Activated CD4-positive, alpha-beta T cell treated with anti-CD3 and anti-CD28 coated beads, Interleukin-2, amount 10 ng/mL, durations not matched to agents 24 days and 14 days (primary cell): ENCODE measurements at regions of chr6 and their contacts with region 1.

Region 1: GRCh38 chr6:125986300-125987025 is at the start of gene TRMT11:
- DNase-seq: peak; percentile 93
- H3K4me3 Mint-ChIP-seq: peak within 1 kb of the TSS; percentile 8
- H3K27ac Mint-ChIP-seq: no peak within 1 kb of the TSS
- H3K4me1 Mint-ChIP-seq: peaks cover 7% of the 10 kb centered on the region
- H3K27me3 Mint-ChIP-seq: no peaks in the 10 kb centered on the region
- total RNA-seq, gene TRMT11: 33.6 and 34.4 TPM in 2 replicates

Region 2: GRCh38 chr6:125153391-125154117 is 832.9 kb before region 1 on chr6 and contains the start of gene TPD52L1:
- intact Hi-C with region 1: loop called (anchors 10 kb)
- DNase-seq: peak; percentile 87
- H3K4me3 Mint-ChIP-seq: peak within 1 kb of the TSS; percentile 79
- H3K27ac Mint-ChIP-seq: no peak within 1 kb of the TSS
- H3K4me1 Mint-ChIP-seq: peaks cover 7% of the 10 kb centered on the region
- H3K27me3 Mint-ChIP-seq: peaks cover 47% of the 10 kb centered on the region
- total RNA-seq, gene TPD52L1: not detected in 2 replicates

Region 3: GRCh38 chr6:126339796-126340609 is 353.5 kb after region 1 on chr6 and contains the start of gene CENPW:
- intact Hi-C with region 1: loop called (anchors 5 kb)
- DNase-seq: peak; percentile 99
- H3K4me3 Mint-ChIP-seq: no peak within 1 kb of the TSS
- H3K27ac Mint-ChIP-seq: no peak within 1 kb of the TSS
- H3K4me1 Mint-ChIP-seq: peaks cover 26% of the 10 kb centered on the region
- H3K27me3 Mint-ChIP-seq: no peaks in the 10 kb centered on the region
- total RNA-seq, gene CENPW: 42.7 and 45.8 TPM in 2 replicates